ENCODE measurements at regions of chr12 and their contacts with region 1.

Region 1: GRCh38 chr12:44403185-44403584 is 472.9 kb downstream of the NELL2 start:
- DNase-seq: no peak
- ATAC-seq: no peak
- H3K4me3 Mint-ChIP-seq: no peak overlapping the region
- H3K27ac Mint-ChIP-seq: no peak overlapping the region
- H3K4me1 Mint-ChIP-seq: no peaks in the 10 kb centered on the region
- H3K27me3 Mint-ChIP-seq: peaks cover 6% of the 10 kb centered on the region

Region 2: GRCh38 chr12:44358636-44359035 is 44.5 kb before region 1 on chr12:
- CTCF ChIA-PET with region 1: no interaction called
- POLR2A ChIA-PET with region 1: no interaction called
- intact Hi-C with region 1: loop called in 1 of 2 experiments (anchors 5 kb)
- DNase-seq: no peak
- ATAC-seq: no peak
- H3K4me3 Mint-ChIP-seq: no peak overlapping the region
- H3K27ac Mint-ChIP-seq: no peak overlapping the region
- H3K4me1 Mint-ChIP-seq: no peaks in the 10 kb centered on the region
- H3K27me3 Mint-ChIP-seq: no peaks in the 10 kb centered on the region

Region 3: DNA sequence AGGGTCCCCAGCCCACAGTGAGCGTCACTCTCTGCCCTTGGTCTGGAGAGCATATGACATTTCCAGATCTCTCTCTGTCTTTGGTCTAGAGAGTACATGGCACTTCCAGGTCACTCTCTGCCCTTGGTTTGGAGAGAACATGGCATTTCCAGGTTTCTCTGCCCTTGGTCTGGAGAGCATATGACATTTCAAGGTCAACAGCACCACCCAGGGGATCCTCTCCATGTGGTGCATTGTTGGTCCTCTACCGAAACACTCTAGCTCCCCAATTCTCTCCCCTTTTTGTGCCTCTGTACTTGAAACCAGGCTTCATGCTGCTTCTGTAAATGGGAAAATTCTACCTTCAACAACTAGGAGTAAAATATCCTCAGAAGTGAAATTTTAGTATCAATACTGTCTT is 73.5 kb after region 1 on chr12:
- CTCF ChIA-PET with region 1: no interaction called
- POLR2A ChIA-PET with region 1: no interaction called
- intact Hi-C with region 1: no loop called
- DNase-seq: no peak
- ATAC-seq: no peak
- H3K4me3 Mint-ChIP-seq: no peak overlapping the region
- H3K27ac Mint-ChIP-seq: no peak overlapping the region
- H3K4me1 Mint-ChIP-seq: no peaks in the 10 kb centered on the region
- H3K27me3 Mint-ChIP-seq: no peaks in the 10 kb centered on the region

Region 4: GRCh38 chr12:44509471-44509870 is 106.3 kb after region 1 on chr12:
- CTCF ChIA-PET with region 1: no interaction called
- POLR2A ChIA-PET with region 1: no interaction called
- intact Hi-C with region 1: no loop called
- DNase-seq: no peak
- ATAC-seq: no peak
- H3K4me3 Mint-ChIP-seq: no peak overlapping the region
- H3K27ac Mint-ChIP-seq: no peak overlapping the region
- H3K4me1 Mint-ChIP-seq: no peaks in the 10 kb centered on the region
- H3K27me3 Mint-ChIP-seq: no peaks in the 10 kb centered on the region

Measured in activated CD4-positive, alpha-beta T cell treated with anti-CD3 and anti-CD28 coated beads for 36 hours (primary cell).